Endothelial cell of umbilical vein (primary cell): ENCODE measurements at regions of chr2 and their contacts with region 1.

Region 1: GRCh38 chr2:70258532-70258874 is 566 bp downstream of the PCYOX1 start:
- DNase-seq: no peak
- H3K4me3 ChIP-seq: peak overlapping the region; percentile 57 to 77 (median 73)
- H3K27ac ChIP-seq: no peak overlapping the region
- H3K4me1 ChIP-seq: peaks cover 4% of the 10 kb centered on the region
- H3K27me3 ChIP-seq: no peaks in the 10 kb centered on the region
- CTCF ChIP-seq: no peak
- POLR2A ChIP-seq: no peak

Region 2: GRCh38 chr2:69829256-69830046 is 429.1 kb before region 1 on chr2 and contains the start of gene GMCL1:
- CTCF ChIA-PET with region 1: no interaction called
- POLR2A ChIA-PET with region 1: interaction called, 10 read pairs
- dilution Hi-C with region 1: no loop called
- intact Hi-C with region 1: no loop called
- DNase-seq: peak; percentile 98
- H3K4me3 ChIP-seq: peak within 1 kb of the TSS; percentile 43 to 70 (median 66)
- H3K27ac ChIP-seq: peak within 1 kb of the TSS; percentile 81
- H3K4me1 ChIP-seq: peaks cover 7% of the 10 kb centered on the region
- H3K27me3 ChIP-seq: no peaks in the 10 kb centered on the region
- CTCF ChIP-seq: no peak
- POLR2A ChIP-seq: peak; percentile 90
- total RNA-seq, gene GMCL1: 13.0 and 14.6 TPM in 2 replicates

Region 3: GRCh38 chr2:70248181-70248847 is 10.2 kb before region 1 on chr2 and contains the start of gene TIA1:
- CTCF ChIA-PET with region 1: interaction called, 5 read pairs
- POLR2A ChIA-PET with region 1: interaction called, 11 read pairs
- dilution Hi-C with region 1: no loop called
- intact Hi-C with region 1: loop called (anchors 1 kb)
- DNase-seq: peak; percentile 99
- H3K4me3 ChIP-seq: peak within 1 kb of the TSS; percentile 75 to 100 (median 97)
- H3K27ac ChIP-seq: peak within 1 kb of the TSS; percentile 82
- H3K4me1 ChIP-seq: peaks cover 23% of the 10 kb centered on the region
- H3K27me3 ChIP-seq: no peaks in the 10 kb centered on the region
- CTCF ChIP-seq: no peak
- POLR2A ChIP-seq: peak; percentile 96
- total RNA-seq, gene TIA1: 140 and 163 TPM in 2 replicates

Region 4: GRCh38 chr2:71068218-71069035 is 809.9 kb after region 1 on chr2 and contains the start of gene NAGK:
- CTCF ChIA-PET with region 1: no interaction called
- POLR2A ChIA-PET with region 1: no interaction called
- dilution Hi-C with region 1: no loop called
- intact Hi-C with region 1: loop called (anchors 5 kb)
- DNase-seq: peak; percentile 97
- H3K4me3 ChIP-seq: peak within 1 kb of the TSS; percentile 67 to 77 (median 72)
- H3K27ac ChIP-seq: peak within 1 kb of the TSS; percentile 69
- H3K4me1 ChIP-seq: peaks cover 27% of the 10 kb centered on the region
- H3K27me3 ChIP-seq: peaks cover 3 to 9% of the 10 kb centered on the region in 2 experiments
- CTCF ChIP-seq: no peak
- POLR2A ChIP-seq: peak; percentile 97
- total RNA-seq, gene NAGK: 125 and 130 TPM in 2 replicates